T-cell (primary cell): ENCODE measurements at regions of chr4 and their contacts with region 1.

Region 1: GRCh38 chr4:170272959-170273358 is 183.2 kb upstream of the AADAT start:
- DNase-seq: no peak
- ATAC-seq: no peak
- H3K4me3 ChIP-seq: no peak overlapping the region
- H3K4me3 Mint-ChIP-seq: no peak overlapping the region
- H3K27ac ChIP-seq: no peak overlapping the region
- H3K27ac Mint-ChIP-seq: no peak overlapping the region
- H3K4me1 ChIP-seq: no peaks in the 10 kb centered on the region
- H3K4me1 Mint-ChIP-seq: no peaks in the 10 kb centered on the region
- H3K27me3 ChIP-seq: no peaks in the 10 kb centered on the region
- H3K27me3 Mint-ChIP-seq: no peaks in the 10 kb centered on the region

Region 2: GRCh38 chr4:170306208-170306607 is 33.2 kb after region 1 on chr4:
- CTCF ChIA-PET with region 1: no interaction called
- POLR2A ChIA-PET with region 1: interaction called in 1 of 2 experiments, 14 read pairs
- DNase-seq: no peak
- ATAC-seq: no peak
- H3K4me3 ChIP-seq: no peak overlapping the region
- H3K4me3 Mint-ChIP-seq: no peak overlapping the region
- H3K27ac ChIP-seq: no peak overlapping the region
- H3K27ac Mint-ChIP-seq: no peak overlapping the region
- H3K4me1 ChIP-seq: no peaks in the 10 kb centered on the region
- H3K4me1 Mint-ChIP-seq: no peaks in the 10 kb centered on the region
- H3K27me3 ChIP-seq: no peaks in the 10 kb centered on the region
- H3K27me3 Mint-ChIP-seq: no peaks in the 10 kb centered on the region